ENCODE measurements at regions of chr12 and their contacts with region 1.

Region 1: GRCh38 chr12:116673681-116674111 is 64.2 kb downstream of the SPRING1 start:
- DNase-seq: no peak
- H3K4me3 ChIP-seq: no peak overlapping the region
- H3K27ac ChIP-seq: peak overlapping the region in 2 of 8 donors; percentile 32 to 45
- H3K4me1 ChIP-seq: peaks cover 24 to 67% (median 42%) of the 10 kb centered on the region in 6 donors
- H3K27me3 ChIP-seq: no peaks in the 10 kb centered on the region
- CTCF ChIP-seq: no peak
- POLR2A ChIP-seq: no peak

Region 2: DNA sequence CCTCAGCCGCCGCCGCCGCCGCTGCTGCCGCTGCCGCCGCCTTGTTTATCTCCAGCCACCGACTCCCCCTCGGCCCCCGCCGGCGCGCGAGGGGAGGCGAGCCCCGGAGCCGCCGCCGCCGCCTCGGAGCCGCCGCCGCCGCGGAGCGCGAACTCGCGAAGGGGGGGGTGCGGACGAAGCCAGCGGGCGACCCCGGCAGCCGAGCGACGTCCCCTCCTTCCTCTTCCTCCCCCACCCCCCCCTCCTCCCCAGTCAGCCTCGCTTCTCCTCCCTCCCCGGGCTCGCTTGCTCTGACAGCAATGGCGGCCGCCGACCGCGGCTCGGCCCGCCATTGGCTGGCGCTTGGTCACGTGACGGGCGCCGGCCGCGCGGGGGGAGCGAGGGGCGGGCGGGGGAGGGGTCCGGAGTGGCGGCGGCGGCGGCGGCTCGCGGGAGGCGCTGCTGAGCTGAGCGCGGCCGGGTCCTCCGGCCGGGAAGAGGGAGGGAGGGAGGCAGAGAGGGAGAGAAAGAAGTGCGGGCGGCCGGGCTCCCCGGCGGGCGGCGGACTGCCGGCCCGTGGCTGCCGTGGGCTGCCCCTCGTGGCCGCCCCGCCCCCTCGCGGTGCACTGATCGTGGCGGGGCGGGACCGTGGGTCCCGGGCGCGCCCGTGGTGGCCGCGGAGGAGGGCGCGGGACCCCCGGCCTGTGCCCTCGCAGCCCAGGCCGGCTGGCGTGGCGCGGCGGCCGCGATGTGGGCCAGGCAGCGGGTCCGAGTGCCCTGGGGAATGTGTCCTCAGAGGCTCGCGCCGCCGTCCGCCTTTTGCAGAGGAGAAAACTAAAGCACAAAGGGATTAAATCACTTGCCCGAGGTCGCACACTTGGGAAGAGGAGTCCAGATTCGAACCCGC is 396.1 kb before region 1 on chr12 and contains the start of gene MED13L:
- intact Hi-C with region 1: loop called (anchors 10 kb)
- DNase-seq: peak; percentile 96
- H3K4me3 ChIP-seq: peak within 1 kb of the TSS; percentile 63 to 88 (median 70)
- H3K27ac ChIP-seq: peak within 1 kb of the TSS; percentile 83 to 99 (median 96)
- H3K4me1 ChIP-seq: peaks cover 28 to 77% (median 51%) of the 10 kb centered on the region in 6 donors
- H3K27me3 ChIP-seq: no peaks in the 10 kb centered on the region
- CTCF ChIP-seq: peak in 6 of 11 experiments; percentile 25 to 69 (median 58)
- POLR2A ChIP-seq: no peak
- total RNA-seq, gene MED13L: 184 to 255 (median 205) TPM

Measured in spleen (tissue), 13 donors.